ENCODE measurements at regions of chr2 and their contacts with region 1.

Region 1: GRCh38 chr2:168246483-168247340 is 683 bp downstream of the STK39 start:
- DNase-seq: peak; percentile 69 to 87 (median 78)
- ATAC-seq: peak; percentile 52 to 86 (median 82)
- H3K4me3 ChIP-seq: peak overlapping the region; percentile 49 to 94 (median 80)
- H3K27ac ChIP-seq: peak overlapping the region; percentile 6 to 93 (median 88)
- H3K4me1 ChIP-seq: peaks cover 0 to 44% (median 27%) of the 10 kb centered on the region in 12 donors
- H3K27me3 ChIP-seq: no peaks in the 10 kb centered on the region
- CTCF ChIP-seq: peak in 9 of 12 donors; percentile 6 to 52 (median 40)
- POLR2A ChIP-seq: no peak

Region 2: DNA sequence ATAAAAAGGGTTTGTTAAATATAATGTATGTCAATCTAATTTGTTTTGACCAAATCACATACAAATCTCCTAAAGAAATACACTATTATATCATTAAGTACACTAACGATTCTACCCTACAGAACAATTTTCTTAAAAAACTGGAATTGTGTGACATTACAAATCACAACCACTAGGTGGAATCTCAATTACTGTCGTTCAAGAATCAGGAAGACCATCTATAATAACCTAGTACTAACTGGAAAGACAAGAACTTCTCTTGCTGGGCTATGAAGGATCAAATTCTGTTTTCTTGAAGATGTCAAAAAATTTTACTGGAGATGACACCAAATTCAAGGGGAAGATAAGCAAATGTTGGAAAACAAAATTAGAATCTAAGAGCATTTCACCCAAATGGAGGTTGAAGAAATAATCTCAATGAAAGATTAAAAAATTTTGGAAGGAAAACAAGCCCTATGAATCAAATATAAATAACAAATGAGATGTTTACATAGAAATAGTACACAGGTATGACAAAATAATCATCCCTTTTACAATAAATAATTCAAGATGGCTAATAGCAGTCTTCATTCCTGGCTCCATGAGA is 110.2 kb before region 1 on chr2:
- intact Hi-C with region 1: loop called in 9 of 10 experiments (anchors 2 to 10 kb)
- DNase-seq: no peak
- ATAC-seq: no peak
- H3K4me3 ChIP-seq: no peak overlapping the region
- H3K27ac ChIP-seq: peak overlapping the region in 4 of 12 donors; percentile 1 to 44 (median 23)
- H3K4me1 ChIP-seq: peaks cover 0 to 39% (median 14%) of the 10 kb centered on the region in 12 donors
- H3K27me3 ChIP-seq: no peaks in the 10 kb centered on the region
- CTCF ChIP-seq: peak; percentile 37 to 69 (median 58)
- POLR2A ChIP-seq: no peak

Region 3: DNA sequence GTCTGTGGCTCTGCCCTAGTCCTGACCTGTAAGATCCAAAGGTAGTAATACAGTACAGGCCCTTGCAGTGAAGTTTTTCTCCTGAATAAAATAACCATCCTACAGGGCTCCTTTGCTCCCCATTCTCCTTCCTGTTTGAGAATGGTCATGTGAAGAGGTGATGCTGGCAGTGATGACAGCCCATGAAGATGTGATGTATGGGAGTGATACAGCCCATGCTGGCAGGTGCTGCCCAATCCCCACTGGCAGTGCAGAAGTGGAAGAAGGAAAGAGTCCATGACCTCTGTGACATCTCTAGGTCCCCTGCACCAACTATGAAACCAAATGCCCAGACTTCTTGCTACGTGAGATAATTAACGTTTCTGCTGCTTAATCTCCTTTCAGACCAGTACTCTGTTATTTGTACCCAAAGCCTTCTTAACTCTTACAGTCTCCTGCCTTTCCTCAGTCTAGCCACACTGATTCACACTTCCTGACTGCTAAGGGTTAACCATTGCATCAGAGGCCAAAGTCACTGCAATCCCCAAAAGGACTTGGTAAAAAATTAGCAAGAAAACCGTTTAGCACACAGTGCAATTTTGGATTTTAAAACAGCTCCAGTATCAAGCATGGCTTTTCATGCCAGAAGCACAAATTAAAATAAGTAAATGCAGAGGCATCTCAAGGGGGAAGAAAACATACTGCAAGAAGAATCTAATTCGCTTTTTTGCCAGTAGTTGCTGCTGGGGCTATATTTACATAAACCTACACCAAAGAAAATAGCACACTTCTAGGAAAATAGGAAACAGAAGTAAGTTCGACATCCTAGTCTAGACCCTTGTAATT is 97.3 kb before region 1 on chr2:
- intact Hi-C with region 1: loop called in 2 of 10 experiments (anchors 5 to 10 kb)
- DNase-seq: no peak
- ATAC-seq: no peak
- H3K4me3 ChIP-seq: no peak overlapping the region
- H3K27ac ChIP-seq: no peak overlapping the region
- H3K4me1 ChIP-seq: peaks cover 0 to 70% (median 39%) of the 10 kb centered on the region in 12 donors
- H3K27me3 ChIP-seq: no peaks in the 10 kb centered on the region
- CTCF ChIP-seq: no peak
- POLR2A ChIP-seq: no peak

Region 4: DNA sequence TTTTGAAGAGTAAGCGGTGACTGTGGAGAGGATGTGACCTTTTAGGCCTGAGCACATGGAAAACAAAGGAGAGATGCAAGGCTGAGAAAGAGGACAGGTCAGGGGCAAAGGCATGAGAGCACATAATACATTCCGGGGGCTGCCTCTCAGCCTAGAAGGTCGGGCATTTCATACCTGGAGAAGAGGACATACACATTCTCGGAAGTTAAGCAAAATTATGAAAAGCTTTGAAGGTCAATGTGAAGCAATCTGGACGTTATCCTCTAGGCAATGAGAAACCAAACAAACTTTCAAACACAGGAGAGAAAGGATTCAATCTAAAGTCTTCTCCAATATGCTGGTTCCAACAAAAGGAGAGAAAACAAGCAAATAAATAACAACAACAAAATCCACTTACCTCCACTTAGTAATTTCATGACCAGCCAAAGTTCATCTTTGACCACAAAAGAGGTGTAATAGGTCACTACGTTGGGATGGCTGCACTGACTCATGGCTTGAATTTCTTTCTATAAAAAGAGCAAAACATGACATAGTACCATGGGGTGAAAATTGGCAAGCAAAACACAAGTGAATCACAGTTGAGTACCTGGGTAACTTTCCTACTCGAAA is 79.7 kb before region 1 on chr2:
- intact Hi-C with region 1: loop called in 1 of 10 experiments (anchors 5 kb)
- DNase-seq: no peak
- ATAC-seq: peak in 2 of 4 donors; percentile 11 to 45
- H3K4me3 ChIP-seq: no peak overlapping the region
- H3K27ac ChIP-seq: peak overlapping the region in 5 of 12 donors; percentile 21 to 44 (median 33)
- H3K4me1 ChIP-seq: peaks cover 0 to 48% (median 19%) of the 10 kb centered on the region in 12 donors
- H3K27me3 ChIP-seq: no peaks in the 10 kb centered on the region
- CTCF ChIP-seq: no peak
- POLR2A ChIP-seq: no peak

Region 5: DNA sequence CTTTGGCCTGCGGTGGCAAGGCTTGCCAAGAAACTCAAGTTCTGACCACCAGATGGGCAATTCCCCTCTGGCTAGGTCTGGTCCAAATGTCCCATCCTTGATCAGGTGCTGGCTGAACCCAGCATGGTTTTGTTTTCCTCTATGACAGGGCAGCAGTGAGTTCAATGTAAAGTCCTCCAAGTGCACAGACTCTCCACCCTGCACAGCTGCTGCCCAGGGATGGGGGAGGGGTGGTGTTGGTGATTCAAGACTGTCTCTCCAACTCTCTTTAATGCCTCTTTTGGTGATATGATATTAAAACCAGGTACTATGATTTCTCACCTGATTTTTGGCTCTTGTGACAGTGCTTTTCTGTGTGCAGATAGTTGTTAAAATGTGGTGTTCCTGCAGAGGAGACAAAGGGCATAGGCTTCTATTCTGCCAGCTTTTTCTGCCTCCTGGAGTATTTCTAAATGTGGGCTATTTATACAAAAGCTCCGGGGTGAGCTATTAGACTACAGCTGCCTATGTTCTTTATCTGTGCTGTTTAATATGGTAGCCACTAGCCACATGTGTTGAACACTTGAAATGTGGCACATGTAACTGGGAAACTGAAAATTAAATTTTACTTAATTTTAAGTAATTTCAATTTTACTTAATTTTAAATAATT is 64.7 kb after region 1 on chr2:
- intact Hi-C with region 1: loop called in 1 of 10 experiments (anchors 5 kb)
- DNase-seq: no peak
- ATAC-seq: peak in 1 of 4 donors; percentile 58
- H3K4me3 ChIP-seq: no peak overlapping the region
- H3K27ac ChIP-seq: no peak overlapping the region
- H3K4me1 ChIP-seq: peaks cover 0 to 30% (median 11%) of the 10 kb centered on the region in 12 donors
- H3K27me3 ChIP-seq: no peaks in the 10 kb centered on the region
- CTCF ChIP-seq: no peak
- POLR2A ChIP-seq: no peak

Region 6: GRCh38 chr2:168336864-168337263 is 90.2 kb after region 1 on chr2:
- intact Hi-C with region 1: loop called in 2 of 10 experiments (anchors 5 to 10 kb)
- DNase-seq: peak in 1 of 5 donors; percentile 29
- ATAC-seq: peak in 3 of 4 donors; percentile 59 to 76 (median 64)
- H3K4me3 ChIP-seq: no peak overlapping the region
- H3K27ac ChIP-seq: no peak overlapping the region
- H3K4me1 ChIP-seq: no peaks in the 10 kb centered on the region
- H3K27me3 ChIP-seq: peaks cover 0 to 2% (median 0%) of the 10 kb centered on the region in 9 donors
- CTCF ChIP-seq: peak in 10 of 12 donors; percentile 22 to 44 (median 33)
- POLR2A ChIP-seq: no peak